ENCODE measurements at regions of chr17 and their contacts with region 1.

Region 1: GRCh38 chr17:77331301-77331864 is 190.6 kb downstream of the SEC14L1 start:
- DNase-seq: peak; percentile 98
- H3K4me3 Mint-ChIP-seq: peak overlapping the region; percentile 70
- H3K27ac Mint-ChIP-seq: no peak overlapping the region
- H3K4me1 Mint-ChIP-seq: peaks cover 37% of the 10 kb centered on the region
- H3K27me3 Mint-ChIP-seq: no peaks in the 10 kb centered on the region

Region 2: DNA sequence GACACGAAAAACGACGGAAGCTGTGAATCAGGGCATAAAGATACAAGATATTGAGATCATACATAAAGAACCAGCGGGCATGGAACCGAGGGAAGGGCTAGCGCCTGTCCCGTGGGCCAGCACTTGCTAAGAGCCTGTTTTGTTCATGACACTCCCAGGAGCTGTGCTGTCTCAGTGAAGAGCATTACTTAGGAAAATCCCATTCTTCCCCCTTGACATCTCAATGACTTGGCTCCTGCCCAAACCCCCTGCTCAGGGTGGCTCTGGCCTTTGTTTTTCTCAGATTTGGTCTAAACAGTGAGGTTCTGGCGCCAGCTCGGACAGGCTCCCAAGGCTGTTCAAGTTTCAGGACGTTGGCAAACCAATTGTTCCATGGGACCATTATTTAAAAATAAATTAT is 269.7 kb before region 1 on chr17:
- CTCF ChIA-PET with region 1: no interaction called
- intact Hi-C with region 1: no loop called
- DNase-seq: no peak
- H3K4me3 Mint-ChIP-seq: no peak overlapping the region
- H3K27ac Mint-ChIP-seq: no peak overlapping the region
- H3K4me1 Mint-ChIP-seq: peaks cover under 1% of the 10 kb centered on the region
- H3K27me3 Mint-ChIP-seq: peaks cover under 1% of the 10 kb centered on the region

Region 3: DNA sequence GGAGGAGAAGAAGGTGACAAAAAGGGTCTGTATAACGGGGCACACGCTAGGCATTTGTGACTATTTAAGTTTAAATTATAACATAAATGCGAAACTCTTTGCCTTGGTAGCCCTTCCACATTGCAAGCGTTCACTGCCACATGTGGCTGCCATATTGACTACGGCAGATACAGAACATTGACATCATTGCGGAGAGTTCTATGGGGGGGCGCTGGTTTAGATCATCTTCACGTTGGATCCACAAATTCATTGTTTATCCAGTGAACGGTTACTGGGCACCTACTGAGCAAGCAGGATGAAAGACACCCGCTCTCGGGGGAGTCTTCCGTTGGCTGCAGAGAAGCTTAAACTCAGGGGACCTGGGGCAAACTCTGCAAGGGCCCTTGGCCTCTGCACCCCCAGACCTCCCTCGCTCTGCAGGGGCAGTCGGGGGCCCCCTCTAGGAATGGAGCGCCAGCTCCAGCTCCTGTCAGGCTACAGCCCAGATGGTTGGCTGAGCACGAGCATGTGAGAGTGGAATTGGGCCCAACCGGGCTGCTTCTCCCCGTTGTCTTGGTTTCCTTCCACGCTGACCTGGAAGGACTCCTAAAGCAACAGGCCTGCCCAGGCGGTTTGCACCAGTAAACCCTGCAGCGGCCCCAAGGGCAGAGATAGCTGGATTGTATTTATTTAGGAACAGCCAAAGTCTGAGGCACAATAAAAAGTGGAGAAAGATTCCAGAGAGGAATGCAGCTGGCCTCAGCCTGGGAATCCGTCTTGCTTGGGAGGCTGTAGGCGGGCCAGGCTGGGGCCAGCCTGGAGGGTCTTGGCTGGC is 18.4 kb before region 1 on chr17:
- CTCF ChIA-PET with region 1: no interaction called
- intact Hi-C with region 1: no loop called
- DNase-seq: no peak
- H3K4me3 Mint-ChIP-seq: no peak overlapping the region
- H3K27ac Mint-ChIP-seq: no peak overlapping the region
- H3K4me1 Mint-ChIP-seq: no peaks in the 10 kb centered on the region
- H3K27me3 Mint-ChIP-seq: no peaks in the 10 kb centered on the region

Region 4: GRCh38 chr17:77372444-77373298 is 41.3 kb after region 1 on chr17:
- CTCF ChIA-PET with region 1: interaction called, 11 read pairs
- intact Hi-C with region 1: loop called (anchors 2 kb)
- DNase-seq: peak; percentile 65
- H3K4me3 Mint-ChIP-seq: peak overlapping the region; percentile 67
- H3K27ac Mint-ChIP-seq: no peak overlapping the region
- H3K4me1 Mint-ChIP-seq: peaks cover 65% of the 10 kb centered on the region
- H3K27me3 Mint-ChIP-seq: no peaks in the 10 kb centered on the region

Region 5: GRCh38 chr17:77391668-77392375 is 60.4 kb after region 1 on chr17:
- CTCF ChIA-PET with region 1: interaction called, 13 read pairs
- intact Hi-C with region 1: no loop called
- DNase-seq: peak; percentile 78
- H3K4me3 Mint-ChIP-seq: peak overlapping the region; percentile 61
- H3K27ac Mint-ChIP-seq: peak overlapping the region; percentile 91
- H3K4me1 Mint-ChIP-seq: peaks cover 57% of the 10 kb centered on the region
- H3K27me3 Mint-ChIP-seq: no peaks in the 10 kb centered on the region

Region 6: DNA sequence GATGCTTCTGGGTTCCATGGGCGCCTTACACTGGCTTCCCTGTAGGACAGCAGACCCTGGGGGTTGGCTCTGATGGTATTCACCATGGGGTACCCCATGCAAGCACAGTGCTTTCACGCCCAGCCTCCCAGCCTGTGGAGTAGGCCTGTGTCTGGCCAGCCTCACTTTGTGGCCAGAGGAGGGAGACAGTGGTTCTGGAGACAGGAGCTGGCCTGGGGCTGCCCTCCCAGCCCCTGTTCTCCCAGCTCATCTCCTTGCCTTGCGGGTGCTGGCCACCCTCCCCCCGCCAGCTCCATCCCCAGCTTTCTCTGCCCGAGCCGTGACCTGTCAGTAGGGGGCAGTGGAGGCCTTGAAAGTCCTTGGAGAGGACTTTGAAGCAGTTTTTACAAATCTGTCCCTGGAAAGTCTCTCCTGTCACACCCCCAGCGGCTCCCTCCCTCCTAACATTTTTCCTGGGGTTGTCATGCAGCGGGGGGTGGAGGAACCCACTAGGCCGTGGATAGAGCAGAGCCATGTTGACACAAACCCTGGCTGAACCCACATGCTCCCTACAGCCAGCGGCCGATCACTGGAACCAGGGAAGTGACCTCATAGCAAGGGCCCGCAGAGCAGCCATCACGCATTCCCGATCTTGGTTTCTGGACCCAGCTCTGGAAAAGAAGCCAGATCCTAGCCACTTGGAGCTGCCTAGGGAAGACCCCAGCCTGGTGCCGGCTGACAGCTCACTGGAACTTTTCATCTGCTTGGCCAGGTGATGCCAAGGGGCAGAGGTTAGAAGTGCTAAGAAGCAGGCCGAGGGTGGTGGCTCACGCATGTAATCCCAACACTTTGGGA is 98.8 kb after region 1 on chr17:
- CTCF ChIA-PET with region 1: interaction called, 16 read pairs
- intact Hi-C with region 1: loop called (anchors 2 kb)
- DNase-seq: peak; percentile 94
- H3K4me3 Mint-ChIP-seq: no peak overlapping the region
- H3K27ac Mint-ChIP-seq: peak overlapping the region; percentile 41
- H3K4me1 Mint-ChIP-seq: peaks cover 92% of the 10 kb centered on the region
- H3K27me3 Mint-ChIP-seq: no peaks in the 10 kb centered on the region

Region 7: DNA sequence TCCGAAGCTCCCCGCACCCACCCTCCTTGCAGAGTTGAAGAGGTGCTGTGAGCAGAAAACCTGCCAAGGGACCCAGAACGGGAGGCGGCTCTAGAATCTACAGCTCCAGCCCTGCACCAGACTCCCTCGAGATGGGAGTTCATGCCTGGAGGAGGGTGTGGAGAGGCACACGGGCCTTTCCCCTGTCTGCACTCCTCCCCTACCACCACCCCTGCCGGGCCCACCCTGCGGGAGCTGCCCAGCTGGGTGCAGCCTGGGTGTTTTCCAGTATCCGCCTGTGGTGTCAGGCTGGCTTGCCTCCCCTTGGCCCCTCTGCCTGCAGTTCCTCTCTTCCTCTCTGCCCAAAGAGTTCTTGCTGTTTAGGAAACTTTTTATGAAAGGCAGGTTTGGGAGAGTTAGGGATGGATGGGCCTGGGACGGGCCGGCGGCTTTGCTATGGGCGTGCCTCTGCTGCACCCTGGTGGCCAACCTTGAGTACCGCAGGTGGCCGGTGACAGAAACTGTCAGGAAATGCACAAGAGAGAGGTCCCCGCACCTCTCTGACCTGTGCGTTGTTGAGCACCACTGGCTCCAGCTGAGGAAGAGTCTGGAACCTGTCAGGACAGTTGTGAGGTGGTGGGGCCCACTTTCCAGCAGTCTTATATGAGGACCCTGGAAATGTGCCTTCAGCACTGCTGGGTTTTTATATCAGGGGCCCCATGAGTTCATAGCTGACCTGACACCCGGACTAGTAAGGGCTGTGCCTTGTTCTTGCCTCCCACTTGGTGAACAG is 163.5 kb after region 1 on chr17:
- CTCF ChIA-PET with region 1: interaction called, 30 read pairs
- intact Hi-C with region 1: loop called (anchors 1 kb)
- DNase-seq: peak; percentile 81
- H3K4me3 Mint-ChIP-seq: no peak overlapping the region
- H3K27ac Mint-ChIP-seq: peak overlapping the region; percentile 77
- H3K4me1 Mint-ChIP-seq: peaks cover 11% of the 10 kb centered on the region
- H3K27me3 Mint-ChIP-seq: no peaks in the 10 kb centered on the region

Measured in activated naive CD4-positive, alpha-beta T cell treated with anti-CD3 and anti-CD28 coated beads for 36 hours (primary cell).